GM12878 (cell line): ENCODE measurements at regions of chr9 and their contacts with region 1.

Region 1: DNA sequence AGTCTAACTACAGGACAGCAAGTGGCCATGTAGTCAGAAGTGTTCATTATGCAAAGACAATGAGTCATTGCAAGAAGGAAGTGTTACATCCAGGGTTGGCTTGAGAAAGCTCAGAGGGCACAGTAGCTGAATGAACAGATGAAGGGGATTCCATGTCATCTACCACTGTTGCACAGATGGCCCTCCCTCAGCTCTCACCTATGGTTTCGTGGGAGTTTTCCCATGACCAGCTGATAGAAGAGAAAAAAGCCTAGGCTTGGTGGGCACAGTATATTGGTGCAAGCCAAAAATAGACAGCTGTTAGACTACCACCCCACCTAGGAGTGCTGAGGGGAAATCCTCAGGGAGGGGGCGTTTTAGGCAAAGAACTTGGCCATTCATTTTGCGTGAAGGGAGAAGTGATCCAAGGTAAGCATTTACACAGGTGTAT is 217.0 kb downstream of the DMRT2 start:
- DNase-seq: peak; percentile 55
- ATAC-seq: peak; percentile 85
- H3K4me3 ChIP-seq: no peak overlapping the region
- H3K27ac ChIP-seq: no peak overlapping the region
- H3K4me1 ChIP-seq: no peaks in the 10 kb centered on the region; the same call in 1 of the 2 replicates
- H3K27me3 ChIP-seq: no peaks in the 10 kb centered on the region
- CTCF ChIP-seq: no peak
- EP300 ChIP-seq: peak; percentile 66 to 79; a peak in 3 of 4 replicates
- POLR2A ChIP-seq: no peak
- RAD21 ChIP-seq: no peak

Region 2: GRCh38 chr9:859251-859650 is 407.9 kb before region 1 on chr9:
- CTCF ChIA-PET with region 1: no interaction called
- POLR2A ChIA-PET with region 1: no interaction called
- RAD21 ChIA-PET with region 1: no interaction called
- SMC1A ChIA-PET with region 1: no interaction called
- in situ Hi-C with region 1: no loop called
- intact Hi-C with region 1: no loop called
- DNase-seq: peak; percentile 69
- ATAC-seq: peak; percentile 99
- H3K4me3 ChIP-seq: no peak overlapping the region
- H3K27ac ChIP-seq: no peak overlapping the region
- H3K4me1 ChIP-seq: peaks cover 7% of the 10 kb centered on the region; the same call in 1 of the 2 replicates
- H3K27me3 ChIP-seq: no peaks in the 10 kb centered on the region
- CTCF ChIP-seq: no peak; a peak in 1 of 6 replicates
- EP300 ChIP-seq: peak; percentile 81 to 86; a peak in 3 of 4 replicates
- POLR2A ChIP-seq: no peak
- RAD21 ChIP-seq: no peak

Region 3: GRCh38 chr9:1018121-1018701 is 248.9 kb before region 1 on chr9:
- CTCF ChIA-PET with region 1: interaction called, 4 read pairs
- POLR2A ChIA-PET with region 1: no interaction called
- RAD21 ChIA-PET with region 1: interaction called, 4 read pairs
- SMC1A ChIA-PET with region 1: interaction called, 11 read pairs
- in situ Hi-C with region 1: no loop called
- intact Hi-C with region 1: no loop called
- DNase-seq: no peak
- ATAC-seq: peak; percentile 93
- H3K4me3 ChIP-seq: no peak overlapping the region
- H3K27ac ChIP-seq: no peak overlapping the region
- H3K4me1 ChIP-seq: no peaks in the 10 kb centered on the region
- H3K27me3 ChIP-seq: peaks cover 3% of the 10 kb centered on the region in 2 experiments; a peak in 3 of 4 replicates
- CTCF ChIP-seq: peak; percentile 25 to 49 (median 33); a peak in 5 of 6 replicates
- EP300 ChIP-seq: no peak
- POLR2A ChIP-seq: no peak
- RAD21 ChIP-seq: peak; percentile 46; the same call in 1 of the 2 replicates

Region 4: GRCh38 chr9:1094749-1095148 is 172.4 kb before region 1 on chr9:
- CTCF ChIA-PET with region 1: interaction called, 8 read pairs
- POLR2A ChIA-PET with region 1: interaction called, 3 read pairs
- RAD21 ChIA-PET with region 1: interaction called, 27 read pairs
- SMC1A ChIA-PET with region 1: interaction called, 38 read pairs
- in situ Hi-C with region 1: no loop called
- intact Hi-C with region 1: no loop called
- DNase-seq: no peak
- ATAC-seq: no peak
- H3K4me3 ChIP-seq: no peak overlapping the region
- H3K27ac ChIP-seq: no peak overlapping the region
- H3K4me1 ChIP-seq: no peaks in the 10 kb centered on the region
- H3K27me3 ChIP-seq: no peaks in the 10 kb centered on the region
- CTCF ChIP-seq: no peak
- EP300 ChIP-seq: no peak
- POLR2A ChIP-seq: no peak
- RAD21 ChIP-seq: no peak

Region 5: DNA sequence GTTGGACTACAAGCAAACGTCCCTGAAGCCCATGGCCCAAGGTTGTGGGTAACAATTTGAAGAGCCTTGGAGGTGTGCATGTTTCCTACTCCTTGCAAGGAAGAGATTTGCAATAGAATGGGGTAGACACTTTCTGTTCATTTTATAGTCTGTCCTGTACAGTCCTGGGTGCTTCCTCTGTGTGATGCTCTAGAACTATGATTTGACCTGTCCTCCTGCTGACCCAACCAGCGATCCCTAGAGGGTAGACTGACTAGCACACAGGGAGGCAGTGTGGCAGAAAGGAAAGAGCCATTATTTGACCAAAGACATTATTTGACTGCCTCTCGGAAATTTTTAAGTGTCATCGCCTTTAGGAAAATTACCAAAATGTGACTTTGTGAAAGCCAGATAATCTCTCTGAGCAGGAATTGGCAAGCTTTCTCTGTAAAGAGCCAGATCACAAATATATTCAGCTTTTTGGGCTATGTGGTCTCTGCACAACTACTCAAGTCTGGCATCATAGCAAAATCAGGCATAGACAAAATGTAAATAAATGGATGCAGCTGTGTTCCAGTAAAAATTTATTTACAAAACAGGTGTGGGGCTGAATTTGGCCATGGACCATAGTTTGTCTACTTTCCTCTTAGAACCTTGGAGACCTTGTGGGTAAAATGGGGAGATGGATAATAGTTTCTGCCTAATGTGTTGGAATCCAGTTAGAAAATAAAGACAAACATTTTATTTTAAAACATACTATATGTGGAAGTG is 110.2 kb before region 1 on chr9:
- CTCF ChIA-PET with region 1: no interaction called
- POLR2A ChIA-PET with region 1: no interaction called
- RAD21 ChIA-PET with region 1: interaction called, 7 read pairs
- SMC1A ChIA-PET with region 1: interaction called, 14 read pairs
- in situ Hi-C with region 1: no loop called
- intact Hi-C with region 1: no loop called
- DNase-seq: no peak
- ATAC-seq: peak; percentile 68
- H3K4me3 ChIP-seq: no peak overlapping the region
- H3K27ac ChIP-seq: no peak overlapping the region
- H3K4me1 ChIP-seq: no peaks in the 10 kb centered on the region
- H3K27me3 ChIP-seq: no peaks in the 10 kb centered on the region
- CTCF ChIP-seq: no peak
- EP300 ChIP-seq: no peak
- POLR2A ChIP-seq: no peak
- RAD21 ChIP-seq: no peak

Region 6: DNA sequence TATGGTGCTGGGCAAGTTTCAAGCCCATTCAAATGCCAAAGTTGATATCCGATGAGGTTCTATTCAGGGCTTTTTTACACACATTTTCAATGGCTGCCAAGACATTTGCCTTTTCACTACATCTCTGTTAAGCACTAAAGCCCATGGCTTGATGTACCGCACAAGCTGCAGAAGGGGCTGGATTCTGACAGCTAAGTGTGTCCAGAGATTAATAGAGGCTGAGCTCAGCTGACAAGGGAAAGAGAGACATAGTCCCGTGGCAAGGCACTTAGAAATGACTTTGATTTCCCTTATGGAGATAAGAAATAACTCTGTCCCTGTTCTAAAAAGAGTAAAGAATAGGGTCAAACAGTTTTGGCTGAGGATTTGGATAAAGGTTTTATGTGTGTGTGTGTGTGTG is 18.4 kb before region 1 on chr9:
- CTCF ChIA-PET with region 1: interaction called, 3 read pairs
- POLR2A ChIA-PET with region 1: interaction called, 5 read pairs
- RAD21 ChIA-PET with region 1: interaction called, 6 read pairs
- SMC1A ChIA-PET with region 1: interaction called, 11 read pairs
- in situ Hi-C with region 1: no loop called
- intact Hi-C with region 1: no loop called
- DNase-seq: no peak
- ATAC-seq: no peak
- H3K4me3 ChIP-seq: no peak overlapping the region
- H3K27ac ChIP-seq: no peak overlapping the region
- H3K4me1 ChIP-seq: no peaks in the 10 kb centered on the region
- H3K27me3 ChIP-seq: no peaks in the 10 kb centered on the region
- CTCF ChIP-seq: no peak
- EP300 ChIP-seq: no peak
- POLR2A ChIP-seq: no peak
- RAD21 ChIP-seq: no peak

Region 7: GRCh38 chr9:1337161-1337560 is 70.0 kb after region 1 on chr9:
- CTCF ChIA-PET with region 1: interaction called, 3 read pairs
- POLR2A ChIA-PET with region 1: interaction called, 3 read pairs
- RAD21 ChIA-PET with region 1: interaction called, 18 read pairs
- SMC1A ChIA-PET with region 1: interaction called, 35 read pairs
- in situ Hi-C with region 1: no loop called
- intact Hi-C with region 1: no loop called
- DNase-seq: no peak
- ATAC-seq: peak; percentile 51
- H3K4me3 ChIP-seq: no peak overlapping the region
- H3K27ac ChIP-seq: no peak overlapping the region
- H3K4me1 ChIP-seq: no peaks in the 10 kb centered on the region
- H3K27me3 ChIP-seq: no peaks in the 10 kb centered on the region
- CTCF ChIP-seq: no peak; a peak in 1 of 6 replicates
- EP300 ChIP-seq: no peak
- POLR2A ChIP-seq: no peak
- RAD21 ChIP-seq: no peak

Region 8: DNA sequence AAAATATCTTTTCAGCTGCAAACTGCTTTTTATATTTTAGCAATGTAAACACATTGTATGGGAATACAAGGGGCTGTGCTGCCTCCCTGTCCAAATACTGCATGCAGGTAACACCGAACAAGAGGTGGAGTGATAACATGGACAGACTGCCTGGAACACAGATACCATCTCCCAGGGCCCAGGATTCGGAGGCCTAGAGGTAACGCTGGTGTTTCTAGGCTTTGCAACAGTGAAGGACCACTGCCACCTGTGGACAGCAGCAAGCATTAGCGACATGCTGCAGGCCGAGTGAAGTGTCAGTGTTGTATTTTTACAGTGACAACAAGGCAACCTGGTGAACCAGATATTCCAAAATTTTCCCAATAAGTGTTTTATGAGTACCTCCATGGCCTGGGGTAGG is 162.1 kb after region 1 on chr9:
- CTCF ChIA-PET with region 1: interaction called, 3 read pairs
- POLR2A ChIA-PET with region 1: no interaction called
- RAD21 ChIA-PET with region 1: interaction called, 8 read pairs
- SMC1A ChIA-PET with region 1: interaction called, 11 read pairs
- in situ Hi-C with region 1: no loop called
- intact Hi-C with region 1: loop called (anchors 10 kb)
- DNase-seq: no peak
- ATAC-seq: peak; percentile 77
- H3K4me3 ChIP-seq: no peak overlapping the region
- H3K27ac ChIP-seq: no peak overlapping the region
- H3K4me1 ChIP-seq: no peaks in the 10 kb centered on the region
- H3K27me3 ChIP-seq: no peaks in the 10 kb centered on the region
- CTCF ChIP-seq: peak in 2 of 3 experiments; percentile 5 to 52; a peak in 2 of 6 replicates
- EP300 ChIP-seq: no peak
- POLR2A ChIP-seq: no peak
- RAD21 ChIP-seq: peak; percentile 21; the same call in 1 of the 2 replicates